ENCODE measurements at regions of chr3 and their contacts with region 1.

Region 1: GRCh38 chr3:171459942-171460724 is at the start of gene TNIK:
- DNase-seq: peak; percentile 28
- H3K4me3 ChIP-seq: peak within 1 kb of the TSS; percentile 76
- CTCF ChIP-seq: no peak

Region 2: DNA sequence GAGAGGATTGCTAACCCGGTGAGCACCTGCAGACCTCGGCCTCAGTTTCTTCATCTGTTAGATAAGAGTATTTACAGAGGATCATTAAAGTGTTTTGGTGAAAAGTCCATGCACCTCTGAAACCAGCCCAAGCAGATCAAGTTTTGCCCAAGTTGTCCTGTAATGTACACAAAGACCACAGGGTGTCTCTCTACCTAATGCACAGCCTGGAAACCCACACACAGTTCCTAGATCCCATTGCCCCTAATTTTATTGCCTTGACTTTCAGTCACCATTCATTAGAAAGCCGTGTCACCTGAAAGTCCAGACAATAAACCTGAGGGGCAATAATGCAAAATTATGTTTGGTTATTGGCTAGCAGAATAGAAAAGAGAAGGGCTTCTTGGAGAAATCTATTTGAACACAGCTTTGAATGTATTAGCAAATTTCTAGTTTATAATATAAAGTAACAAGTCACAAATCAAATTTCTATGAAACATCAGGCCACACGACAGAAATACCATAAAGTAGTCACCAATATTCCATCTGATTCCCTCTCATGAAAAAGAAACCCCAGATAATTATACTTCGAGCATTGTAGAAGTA is 272.3 kb before region 1 on chr3:
- CTCF ChIA-PET with region 1: interaction called, 15 read pairs
- POLR2A ChIA-PET with region 1: no interaction called
- DNase-seq: no peak
- H3K4me3 ChIP-seq: no peak overlapping the region
- CTCF ChIP-seq: peak; percentile 59

Region 3: DNA sequence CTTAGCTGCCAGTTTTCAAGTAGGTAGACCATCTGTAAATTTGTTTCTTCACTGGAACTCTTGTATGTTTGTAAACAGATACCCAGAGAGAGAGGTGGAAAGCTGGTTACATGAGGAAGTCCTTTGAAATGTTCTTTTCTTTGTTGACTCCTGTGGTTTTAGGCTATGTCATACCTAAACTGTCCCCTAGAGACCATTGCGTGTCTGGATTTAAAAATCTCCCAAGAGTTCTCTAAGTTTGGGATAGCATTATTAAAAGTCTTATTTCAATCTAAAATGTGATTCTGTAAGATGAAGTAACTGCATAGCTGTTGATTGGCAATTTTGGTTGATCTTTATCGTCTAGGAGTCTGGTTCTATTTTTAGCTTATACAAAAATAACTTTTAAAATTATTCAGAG is 860.9 kb after region 1 on chr3:
- CTCF ChIA-PET with region 1: no interaction called
- POLR2A ChIA-PET with region 1: no interaction called
- DNase-seq: no peak
- H3K4me3 ChIP-seq: no peak overlapping the region
- CTCF ChIP-seq: no peak

Measured in AG04449 (cell line).